ENCODE measurements at regions of chr16 and their contacts with region 1.

Region 1: DNA sequence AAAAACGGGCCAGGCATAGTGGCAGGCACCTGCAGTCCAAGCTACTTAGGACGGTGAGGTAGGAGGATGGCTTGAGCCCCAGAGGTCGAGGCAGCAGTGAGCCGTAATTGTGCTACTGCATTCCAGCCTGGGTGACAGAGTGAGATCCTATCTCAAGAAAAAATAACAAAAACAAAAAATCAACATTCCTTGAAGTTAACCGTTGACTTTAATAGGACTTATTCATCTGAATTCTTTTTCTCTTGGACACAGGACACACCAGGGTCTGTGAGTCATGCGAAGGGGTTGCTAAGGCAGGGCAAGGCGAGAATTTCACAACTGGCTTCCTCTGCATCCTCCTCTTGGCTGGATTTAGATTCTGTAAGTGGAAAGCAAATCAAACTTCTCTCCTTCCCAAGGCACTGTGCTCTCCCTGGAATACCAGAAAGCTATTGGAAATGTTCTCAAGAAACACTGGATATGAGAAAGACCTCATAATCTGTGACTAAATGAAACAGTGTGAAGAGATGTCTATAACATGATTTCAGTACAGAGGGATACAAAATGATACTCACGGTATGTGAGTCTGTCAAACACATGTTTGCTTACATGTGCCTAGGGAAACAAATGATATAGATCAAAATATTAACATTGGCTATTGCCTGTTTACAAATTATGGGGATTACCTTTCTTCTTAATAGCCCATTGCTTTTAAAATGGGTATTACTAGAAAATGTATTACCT is 99.6 kb downstream of the SYCE1L start:
- DNase-seq: peak; percentile 98
- H3K4me3 ChIP-seq: no peak overlapping the region
- H3K27ac ChIP-seq: peak overlapping the region; percentile 98
- H3K4me1 ChIP-seq: peaks cover 44% of the 10 kb centered on the region
- H3K27me3 ChIP-seq: no peaks in the 10 kb centered on the region
- CTCF ChIP-seq: no peak
- POLR2A ChIP-seq: peak; percentile 31

Region 2: DNA sequence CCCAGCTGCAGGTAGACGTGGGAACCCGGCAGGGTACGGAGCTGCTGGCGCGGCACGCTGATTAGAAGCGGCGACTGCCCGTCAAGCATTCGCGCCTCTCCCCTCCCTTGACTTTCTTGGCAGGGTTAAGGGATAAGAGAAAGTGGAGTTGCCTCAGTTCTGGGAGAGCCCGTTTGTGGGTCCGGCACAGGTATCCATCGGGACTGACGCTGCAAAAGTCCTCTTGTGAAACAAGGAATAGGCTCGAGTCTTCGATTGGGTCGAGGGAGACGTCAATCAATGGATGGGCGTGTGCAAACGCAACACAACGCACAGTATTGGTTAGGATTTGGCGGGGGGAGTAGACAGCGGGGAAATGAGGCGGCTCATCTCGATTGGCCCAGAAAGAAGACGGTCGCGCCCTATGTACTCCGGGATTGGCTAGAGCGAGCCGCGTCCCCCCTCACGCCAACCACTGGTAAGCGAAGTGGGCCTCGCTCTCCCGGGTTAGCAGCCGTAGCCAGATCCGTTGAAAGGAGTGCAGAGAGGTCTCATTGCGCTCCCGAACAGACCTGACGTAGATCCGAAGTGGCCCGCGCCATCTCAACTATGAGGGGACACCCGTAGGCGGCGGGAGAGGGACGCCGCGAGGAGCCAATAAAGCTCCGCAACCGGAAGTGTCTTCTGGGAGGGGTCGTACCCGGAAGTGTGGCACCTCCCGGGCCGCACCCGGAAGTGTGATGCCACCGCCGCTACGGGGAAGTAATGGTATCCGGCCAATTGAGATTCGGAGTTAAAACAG is 108.1 kb before region 1 on chr16 and contains the start of gene MON1B:
- CTCF ChIA-PET with region 1: no interaction called
- POLR2A ChIA-PET with region 1: no interaction called
- dilution Hi-C with region 1: no loop called
- intact Hi-C with region 1: loop called (anchors 1 kb)
- DNase-seq: peak; percentile 99
- H3K4me3 ChIP-seq: peak within 1 kb of the TSS; percentile 66 to 91 (median 70)
- H3K27ac ChIP-seq: peak within 1 kb of the TSS; percentile 82
- H3K4me1 ChIP-seq: peaks cover 12% of the 10 kb centered on the region
- H3K27me3 ChIP-seq: peaks cover 2% of the 10 kb centered on the region in 2 experiments
- CTCF ChIP-seq: no peak
- POLR2A ChIP-seq: peak; percentile 74
- total RNA-seq, gene MON1B: 50.1 and 57.0 TPM in 2 replicates

Region 3: GRCh38 chr16:77406677-77407076 is 107.9 kb after region 1 on chr16:
- CTCF ChIA-PET with region 1: no interaction called
- POLR2A ChIA-PET with region 1: no interaction called
- dilution Hi-C with region 1: no loop called
- intact Hi-C with region 1: loop called (anchors 2 kb)
- DNase-seq: peak; percentile 32
- H3K4me3 ChIP-seq: no peak overlapping the region
- H3K27ac ChIP-seq: no peak overlapping the region
- H3K4me1 ChIP-seq: peaks cover 25% of the 10 kb centered on the region
- H3K27me3 ChIP-seq: no peaks in the 10 kb centered on the region
- CTCF ChIP-seq: peak; percentile 26 to 28
- POLR2A ChIP-seq: no peak

Region 4: GRCh38 chr16:77457046-77457445 is 158.2 kb after region 1 on chr16:
- CTCF ChIA-PET with region 1: no interaction called
- POLR2A ChIA-PET with region 1: no interaction called
- dilution Hi-C with region 1: no loop called
- intact Hi-C with region 1: loop called (anchors 1 kb)
- DNase-seq: peak; percentile 93
- H3K4me3 ChIP-seq: peak overlapping the region in 1 of 3 experiments; percentile 60
- H3K27ac ChIP-seq: peak overlapping the region; percentile 95
- H3K4me1 ChIP-seq: peaks cover 19% of the 10 kb centered on the region
- H3K27me3 ChIP-seq: no peaks in the 10 kb centered on the region
- CTCF ChIP-seq: no peak
- POLR2A ChIP-seq: no peak

Region 5: DNA sequence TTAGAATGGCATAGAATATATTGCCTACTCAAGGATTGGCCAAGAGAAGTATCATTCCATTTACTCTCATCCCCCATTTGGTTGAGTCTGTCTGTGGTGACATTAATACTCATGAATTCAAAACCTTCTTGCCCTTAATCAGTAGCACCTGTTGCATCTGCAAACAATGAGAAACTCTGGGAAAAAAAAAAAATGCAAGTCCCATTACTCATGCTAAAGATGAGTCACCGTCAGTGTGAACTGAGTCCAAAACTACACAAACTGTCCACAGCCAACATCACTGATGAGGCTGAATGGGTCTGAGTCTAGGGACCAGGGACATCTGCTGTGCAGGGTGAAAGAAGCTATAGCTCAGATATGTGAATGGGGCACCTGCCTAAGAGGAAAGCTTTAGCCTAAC is 233.0 kb after region 1 on chr16:
- CTCF ChIA-PET with region 1: no interaction called
- POLR2A ChIA-PET with region 1: no interaction called
- dilution Hi-C with region 1: no loop called
- intact Hi-C with region 1: no loop called
- DNase-seq: peak; percentile 63
- H3K4me3 ChIP-seq: no peak overlapping the region
- H3K27ac ChIP-seq: no peak overlapping the region
- H3K4me1 ChIP-seq: no peaks in the 10 kb centered on the region
- H3K27me3 ChIP-seq: peaks cover 0 to 5% of the 10 kb centered on the region in 2 experiments
- CTCF ChIP-seq: no peak
- POLR2A ChIP-seq: no peak

Region 6: DNA sequence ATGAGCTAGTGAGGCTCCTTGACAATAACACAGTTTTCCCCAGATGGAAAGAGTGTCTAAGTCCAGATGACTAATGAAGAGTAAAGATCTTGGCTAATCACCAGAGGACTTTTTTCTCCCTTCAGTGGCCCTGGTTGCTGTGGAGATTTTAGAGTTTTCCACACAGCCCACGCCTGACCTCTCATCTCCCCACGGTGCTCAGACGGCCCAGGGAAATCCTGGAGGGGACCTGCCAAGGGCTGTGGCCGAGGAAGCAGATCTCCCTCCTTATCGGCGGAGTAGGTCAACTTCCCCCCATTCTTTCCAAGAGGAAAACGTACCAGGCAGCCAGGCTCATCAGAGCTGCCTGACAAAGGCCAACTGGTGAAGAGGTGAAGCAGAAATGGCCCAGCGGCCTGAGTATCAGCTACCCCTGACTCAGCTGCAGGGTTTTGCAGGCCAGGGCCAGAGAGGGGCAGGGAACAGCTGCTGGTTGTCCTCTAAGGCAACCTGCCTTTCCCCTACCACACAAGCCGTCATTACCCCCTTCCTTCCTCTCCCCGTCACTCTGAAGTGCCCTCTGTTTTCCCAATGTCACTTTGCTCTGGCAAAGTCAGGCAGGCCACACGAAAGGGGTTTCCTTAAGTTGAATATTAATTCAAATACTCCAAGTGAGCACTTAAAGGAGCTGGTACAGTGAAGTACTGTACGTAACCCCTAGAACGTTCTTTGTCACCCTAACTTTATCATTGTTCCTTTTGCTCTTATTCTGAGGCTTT is 276.2 kb after region 1 on chr16:
- CTCF ChIA-PET with region 1: no interaction called
- POLR2A ChIA-PET with region 1: no interaction called
- dilution Hi-C with region 1: no loop called
- intact Hi-C with region 1: loop called (anchors 2 kb)
- DNase-seq: peak; percentile 98
- H3K4me3 ChIP-seq: no peak overlapping the region
- H3K27ac ChIP-seq: peak overlapping the region; percentile 95
- H3K4me1 ChIP-seq: peaks cover 49% of the 10 kb centered on the region
- H3K27me3 ChIP-seq: no peaks in the 10 kb centered on the region
- CTCF ChIP-seq: no peak
- POLR2A ChIP-seq: peak; percentile 52

Region 7: DNA sequence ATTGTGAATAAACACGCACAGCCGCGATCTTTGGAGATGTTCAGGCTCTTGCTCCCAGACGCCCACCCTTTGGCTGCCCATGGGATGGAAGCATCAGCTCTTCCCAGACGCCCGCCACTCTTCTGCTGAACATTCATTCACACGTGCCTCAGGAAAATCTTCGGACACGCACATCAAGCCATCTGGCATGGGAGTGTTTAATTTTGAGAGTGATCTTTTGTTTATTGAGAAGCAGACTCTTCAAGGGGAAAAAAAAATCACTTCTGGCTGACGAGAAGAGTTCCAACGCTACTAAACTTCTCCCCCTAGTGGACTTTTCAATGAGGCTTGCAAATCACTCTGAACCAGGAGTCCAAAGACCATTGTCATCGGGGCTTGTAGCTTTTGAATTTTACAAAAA is 361.5 kb after region 1 on chr16:
- CTCF ChIA-PET with region 1: no interaction called
- POLR2A ChIA-PET with region 1: no interaction called
- dilution Hi-C with region 1: no loop called
- intact Hi-C with region 1: loop called (anchors 1 kb)
- DNase-seq: peak; percentile 81
- H3K4me3 ChIP-seq: no peak overlapping the region
- H3K27ac ChIP-seq: peak overlapping the region; percentile 40
- H3K4me1 ChIP-seq: peaks cover 10% of the 10 kb centered on the region
- H3K27me3 ChIP-seq: no peaks in the 10 kb centered on the region
- CTCF ChIP-seq: peak; percentile 65 to 68
- POLR2A ChIP-seq: no peak

Region 8: DNA sequence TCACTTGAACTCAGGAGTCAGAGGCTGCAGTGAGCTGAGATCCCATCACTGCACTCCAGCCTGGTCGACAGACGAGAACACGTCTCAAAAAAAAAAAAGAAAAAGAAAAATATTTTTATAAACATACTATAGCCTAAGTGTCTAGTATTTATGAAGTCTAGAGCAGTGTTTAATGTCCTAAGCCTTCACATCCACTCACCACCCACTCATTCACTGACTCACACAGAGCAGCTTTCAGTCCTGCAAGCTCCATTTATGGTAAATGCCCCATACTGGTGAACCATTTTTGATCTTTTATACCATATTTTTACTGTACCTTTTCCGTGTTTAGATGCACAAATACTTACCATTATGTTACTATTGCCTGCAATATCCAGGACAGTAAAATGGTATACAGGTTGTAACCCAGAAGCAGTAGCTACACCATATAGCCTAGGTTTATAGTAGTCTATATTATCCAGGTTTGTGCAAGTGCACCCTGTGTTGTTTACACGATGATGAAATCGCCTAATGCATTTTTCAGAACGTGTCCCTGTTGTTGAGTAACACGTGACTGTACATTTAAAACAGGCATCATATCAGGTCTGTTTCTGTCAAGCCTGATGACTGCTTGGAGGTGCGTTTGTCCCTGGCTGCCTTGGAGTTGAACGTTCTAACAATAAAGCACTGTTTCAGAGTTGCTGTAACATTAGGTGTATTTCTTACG is 433.6 kb after region 1 on chr16:
- CTCF ChIA-PET with region 1: no interaction called
- POLR2A ChIA-PET with region 1: no interaction called
- dilution Hi-C with region 1: no loop called
- intact Hi-C with region 1: no loop called
- DNase-seq: no peak
- H3K4me3 ChIP-seq: no peak overlapping the region
- H3K27ac ChIP-seq: no peak overlapping the region
- H3K4me1 ChIP-seq: no peaks in the 10 kb centered on the region
- H3K27me3 ChIP-seq: no peaks in the 10 kb centered on the region
- CTCF ChIP-seq: no peak
- POLR2A ChIP-seq: no peak

Region 9: DNA sequence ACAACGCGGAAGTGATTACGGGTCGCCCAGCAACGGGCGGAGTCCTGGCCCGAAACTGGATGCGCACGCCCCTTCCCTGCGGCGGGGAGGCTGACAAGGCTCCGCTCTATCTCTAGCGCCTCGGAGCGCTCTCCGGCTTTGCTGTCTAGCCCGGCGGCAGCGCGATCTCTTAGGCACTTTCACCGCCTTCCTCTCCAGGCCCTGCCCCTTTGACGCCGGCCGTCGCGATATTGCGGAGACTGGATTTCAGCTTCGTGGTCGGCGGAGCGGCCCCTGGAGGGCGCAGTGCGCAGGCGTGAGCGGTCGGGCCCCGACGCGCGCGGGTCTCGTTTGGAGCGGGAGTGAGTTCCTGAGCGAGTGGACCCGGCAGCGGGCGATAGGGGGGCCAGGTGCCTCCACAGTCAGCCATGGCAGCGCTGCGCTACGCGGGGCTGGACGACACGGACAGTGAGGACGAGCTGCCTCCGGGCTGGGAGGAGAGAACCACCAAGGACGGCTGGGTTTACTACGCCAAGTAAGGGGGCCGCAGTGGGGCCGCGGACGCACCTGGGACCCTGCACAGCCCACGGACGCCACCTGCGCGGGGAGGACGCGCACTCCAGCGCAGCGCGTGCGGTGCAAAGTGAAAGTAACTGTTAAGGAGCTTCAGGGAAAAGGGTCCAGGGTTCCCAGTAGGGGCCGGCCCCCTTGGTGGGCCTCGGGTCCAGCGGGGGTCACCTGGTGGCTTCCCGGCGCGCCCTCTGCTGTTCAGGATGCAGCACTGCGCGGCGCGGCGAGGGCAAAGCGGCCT is 800.8 kb after region 1 on chr16 and contains the start of gene WWOX:
- CTCF ChIA-PET with region 1: no interaction called
- POLR2A ChIA-PET with region 1: no interaction called
- dilution Hi-C with region 1: no loop called
- intact Hi-C with region 1: loop called (anchors 1 kb)
- DNase-seq: peak; percentile 99
- H3K4me3 ChIP-seq: peak within 1 kb of the TSS; percentile 47 to 79 (median 54)
- H3K27ac ChIP-seq: peak within 1 kb of the TSS; percentile 55
- H3K4me1 ChIP-seq: peaks cover 9% of the 10 kb centered on the region
- H3K27me3 ChIP-seq: no peaks in the 10 kb centered on the region
- CTCF ChIP-seq: peak; percentile 87 to 96
- POLR2A ChIP-seq: no peak
- total RNA-seq, gene WWOX: 12.0 and 12.5 TPM in 2 replicates